PC-3 (cell line): ENCODE measurements at regions of chr1 and their contacts with region 1.

Region 1: DNA sequence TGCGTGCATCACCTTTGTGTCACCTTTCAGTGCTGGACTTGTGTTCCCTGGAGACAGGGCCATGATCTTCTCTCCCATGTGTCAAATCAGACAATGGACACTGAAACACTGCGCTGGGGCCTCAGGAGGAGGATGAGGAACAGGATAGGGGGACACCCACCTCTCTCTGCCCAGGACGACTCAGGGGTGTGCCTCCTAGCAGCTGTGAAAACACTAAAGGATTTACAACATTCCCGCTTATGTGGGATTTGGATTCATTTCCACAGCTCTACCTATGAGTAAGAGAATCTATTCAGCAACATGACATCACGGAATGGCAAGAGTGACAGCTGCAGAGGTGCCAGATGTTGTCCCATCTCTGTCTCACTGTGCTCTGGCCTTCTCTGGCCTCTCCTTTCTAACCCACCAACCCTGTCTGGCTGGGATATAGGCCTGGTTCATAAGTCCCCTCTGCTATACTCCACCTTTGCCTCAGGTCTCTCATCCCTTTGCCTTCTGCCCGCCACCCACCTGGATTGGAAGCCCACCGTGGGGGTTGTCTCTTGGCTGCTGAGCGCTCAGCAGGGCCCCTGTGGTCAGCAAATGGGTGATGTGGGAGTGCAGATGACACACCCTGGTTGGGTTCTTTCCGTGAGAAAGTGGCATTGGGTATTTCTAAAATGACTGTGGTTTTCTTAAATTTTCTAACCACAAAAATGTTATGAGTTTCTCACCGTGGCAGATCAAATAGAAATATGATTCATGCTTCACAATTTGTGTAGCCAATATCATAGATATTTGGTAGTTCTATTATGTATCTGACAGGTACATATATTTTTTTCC is 47.1 kb upstream of the TLR5 start:
- DNase-seq: peak; percentile 98
- ATAC-seq: peak; percentile 90
- H3K4me3 ChIP-seq: peak overlapping the region; percentile 9; the same call in 1 of the 2 replicates
- H3K27ac ChIP-seq: peak overlapping the region; percentile 93
- H3K4me1 ChIP-seq: peaks cover 31% of the 10 kb centered on the region
- H3K27me3 ChIP-seq: no peaks in the 10 kb centered on the region
- CTCF ChIP-seq: no peak

Region 2: DNA sequence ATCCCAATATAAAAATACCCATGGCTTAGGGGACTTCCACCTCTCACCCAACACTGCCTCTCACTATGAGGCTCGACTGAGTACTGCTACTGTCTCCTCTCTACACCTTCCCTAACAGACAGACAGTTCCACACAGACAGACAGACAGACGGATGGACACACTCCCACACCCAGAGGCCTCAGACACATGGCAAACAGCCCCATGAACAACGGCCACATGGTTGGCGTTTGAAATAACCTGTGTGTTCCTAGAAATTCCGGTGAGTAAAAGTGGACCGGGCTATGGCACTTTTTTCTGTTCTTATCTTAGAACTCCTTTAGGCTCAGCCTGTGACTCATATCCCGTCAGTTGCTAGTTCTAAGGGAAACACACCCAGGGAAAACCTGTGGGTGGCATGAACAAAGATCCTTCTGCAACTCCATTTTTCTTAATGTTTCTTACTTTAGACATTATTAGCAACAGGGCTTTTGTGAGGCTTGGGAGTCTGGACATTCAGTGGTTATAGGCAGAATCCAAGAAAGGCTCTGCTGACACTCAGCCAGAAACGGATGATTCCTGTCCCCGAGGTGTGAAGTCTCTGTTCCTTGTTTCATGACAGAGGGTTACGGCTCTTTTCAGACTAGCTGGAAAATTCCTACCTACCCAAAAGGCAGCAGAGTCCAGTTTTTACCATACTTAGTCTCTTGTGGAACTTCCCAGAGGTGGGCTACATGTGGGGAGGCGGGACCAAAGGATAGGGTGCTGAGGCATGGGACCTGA is 43.5 kb after region 1 on chr1:
- CTCF ChIA-PET with region 1: no interaction called
- POLR2A ChIA-PET with region 1: no interaction called
- intact Hi-C with region 1: loop called (anchors 1 kb)
- DNase-seq: peak; percentile 92
- ATAC-seq: peak; percentile 96
- H3K4me3 ChIP-seq: no peak overlapping the region
- H3K27ac ChIP-seq: peak overlapping the region; percentile 74
- H3K4me1 ChIP-seq: peaks cover 41% of the 10 kb centered on the region
- H3K27me3 ChIP-seq: no peaks in the 10 kb centered on the region
- CTCF ChIP-seq: no peak